ENCODE measurements at regions of chr5 and their contacts with region 1.

Region 1: DNA sequence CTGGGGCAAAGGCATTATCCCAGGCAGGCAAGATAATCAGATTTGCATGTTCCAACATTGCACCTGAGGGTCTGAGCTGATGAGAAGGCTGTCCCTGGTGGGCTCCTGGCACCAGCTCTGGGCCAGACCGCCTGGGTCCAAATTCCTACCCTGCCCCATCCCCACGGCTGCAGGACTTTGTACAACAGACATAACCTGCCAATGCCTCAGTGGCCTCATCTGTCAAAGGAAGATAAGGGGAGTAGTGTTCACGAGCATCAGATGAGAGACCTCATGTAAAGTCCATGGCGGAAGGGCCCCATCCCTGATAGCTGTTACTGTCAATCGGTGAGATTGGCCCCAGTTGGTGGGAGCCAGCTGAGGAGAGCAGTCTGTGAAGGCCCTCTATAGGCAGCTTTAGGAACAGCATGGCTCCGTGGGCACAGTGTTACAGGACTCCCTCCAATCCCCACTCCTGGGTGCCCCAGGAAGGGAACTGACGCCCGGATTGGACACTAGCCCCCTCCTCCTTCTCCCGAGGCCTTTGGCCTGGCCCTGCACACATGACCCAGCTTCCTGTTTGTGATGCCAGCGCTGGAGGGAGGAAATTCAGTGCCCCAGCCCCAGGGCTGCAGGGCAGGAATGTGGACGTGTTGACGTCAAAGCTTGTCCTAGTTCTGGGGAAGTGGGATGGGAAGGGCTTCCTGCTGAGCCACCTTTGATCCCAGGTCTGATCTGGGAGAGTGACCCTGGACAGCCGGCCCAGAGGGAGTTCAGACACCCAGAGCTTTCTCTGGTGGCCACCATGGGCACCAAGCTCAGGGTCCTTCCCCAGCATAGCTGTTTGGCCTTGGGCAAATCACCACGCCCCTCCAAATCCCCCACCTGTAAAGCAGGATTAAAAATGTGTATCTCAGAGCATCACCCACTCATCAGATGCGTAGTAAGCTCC is 56.2 kb downstream of the DUSP1 start:
- DNase-seq: peak; percentile 59 to 72
- ATAC-seq: peak; percentile 52 to 73
- H3K4me3 ChIP-seq: no peak overlapping the region
- H3K27ac ChIP-seq: peak overlapping the region; percentile 64 to 80 (median 76)
- H3K4me1 ChIP-seq: peaks cover 16 to 32% of the 10 kb centered on the region in 2 donors
- H3K27me3 ChIP-seq: no peaks in the 10 kb centered on the region
- CTCF ChIP-seq: peak; percentile 83 to 89 (median 87)
- POLR2A ChIP-seq: no peak

Region 2: GRCh38 chr5:172764849-172765765 is 50.4 kb after region 1 on chr5:
- in situ Hi-C with region 1: loop called in 1 of 4 experiments (anchors 10 kb)
- intact Hi-C with region 1: loop called (anchors 2 kb)
- DNase-seq: peak; percentile 91 to 95
- ATAC-seq: peak; percentile 53 to 60
- H3K4me3 ChIP-seq: peak overlapping the region; percentile 66 to 98 (median 83)
- H3K27ac ChIP-seq: peak overlapping the region; percentile 96 to 99 (median 96)
- H3K4me1 ChIP-seq: peaks cover 19 to 22% of the 10 kb centered on the region in 2 donors
- H3K27me3 ChIP-seq: no peaks in the 10 kb centered on the region
- CTCF ChIP-seq: peak in 2 of 5 experiments; percentile 14 to 28
- POLR2A ChIP-seq: no peak

Region 3: DNA sequence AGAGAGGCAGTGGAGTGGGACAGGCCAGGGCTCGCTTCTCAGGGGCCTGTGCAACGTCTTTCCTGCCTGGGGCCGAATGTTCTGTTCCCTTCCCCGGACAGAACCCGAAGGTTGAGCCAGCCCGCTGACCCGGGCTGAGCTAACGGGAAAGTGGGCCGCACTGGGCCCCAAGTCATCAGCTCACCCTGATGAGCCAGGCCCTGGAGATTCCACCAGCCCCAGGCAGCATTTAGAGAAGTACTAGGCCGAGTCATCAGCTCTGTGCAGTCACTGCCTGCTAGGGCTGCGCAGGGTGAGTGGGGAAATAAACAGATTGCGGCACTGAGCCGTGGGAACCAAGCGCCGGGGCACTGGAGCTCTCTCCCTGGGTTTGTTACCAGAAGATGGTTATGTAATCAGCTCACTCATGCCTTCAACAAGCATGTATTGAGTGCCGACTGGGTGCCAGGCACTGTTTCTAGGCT is 85.4 kb after region 1 on chr5:
- in situ Hi-C with region 1: no loop called
- intact Hi-C with region 1: no loop called
- DNase-seq: no peak
- ATAC-seq: no peak
- H3K4me3 ChIP-seq: no peak overlapping the region
- H3K27ac ChIP-seq: peak overlapping the region in 2 of 4 donors; percentile 3 to 31
- H3K4me1 ChIP-seq: peaks cover 10 to 15% of the 10 kb centered on the region in 2 donors
- H3K27me3 ChIP-seq: no peaks in the 10 kb centered on the region
- CTCF ChIP-seq: no peak
- POLR2A ChIP-seq: no peak

Region 4: GRCh38 chr5:172833686-172834414 is 119.1 kb after region 1 on chr5 and contains the start of gene ERGIC1:
- in situ Hi-C with region 1: no loop called
- intact Hi-C with region 1: loop called (anchors 10 kb)
- DNase-seq: peak; percentile 81 to 86
- ATAC-seq: peak; percentile 83 to 85
- H3K4me3 ChIP-seq: peak within 1 kb of the TSS; percentile 71 to 97 (median 86)
- H3K27ac ChIP-seq: peak within 1 kb of the TSS; percentile 83 to 93 (median 87)
- H3K4me1 ChIP-seq: peaks cover 30 to 34% of the 10 kb centered on the region in 2 donors
- H3K27me3 ChIP-seq: no peaks in the 10 kb centered on the region
- CTCF ChIP-seq: peak in 1 of 5 experiments; percentile 20
- POLR2A ChIP-seq: peak; percentile 83 to 93
- total RNA-seq, gene ERGIC1: 54.4 to 108 (median 88.0) TPM

Region 5: GRCh38 chr5:172902497-172903200 is 187.9 kb after region 1 on chr5:
- in situ Hi-C with region 1: no loop called
- intact Hi-C with region 1: loop called (anchors 2 kb)
- DNase-seq: peak; percentile 69 to 83
- ATAC-seq: peak; percentile 37 to 51
- H3K4me3 ChIP-seq: no peak overlapping the region
- H3K27ac ChIP-seq: peak overlapping the region; percentile 85 to 94 (median 92)
- H3K4me1 ChIP-seq: peaks cover 63 to 84% of the 10 kb centered on the region in 2 donors
- H3K27me3 ChIP-seq: no peaks in the 10 kb centered on the region
- CTCF ChIP-seq: peak; percentile 50 to 77 (median 63)
- POLR2A ChIP-seq: no peak

Region 6: DNA sequence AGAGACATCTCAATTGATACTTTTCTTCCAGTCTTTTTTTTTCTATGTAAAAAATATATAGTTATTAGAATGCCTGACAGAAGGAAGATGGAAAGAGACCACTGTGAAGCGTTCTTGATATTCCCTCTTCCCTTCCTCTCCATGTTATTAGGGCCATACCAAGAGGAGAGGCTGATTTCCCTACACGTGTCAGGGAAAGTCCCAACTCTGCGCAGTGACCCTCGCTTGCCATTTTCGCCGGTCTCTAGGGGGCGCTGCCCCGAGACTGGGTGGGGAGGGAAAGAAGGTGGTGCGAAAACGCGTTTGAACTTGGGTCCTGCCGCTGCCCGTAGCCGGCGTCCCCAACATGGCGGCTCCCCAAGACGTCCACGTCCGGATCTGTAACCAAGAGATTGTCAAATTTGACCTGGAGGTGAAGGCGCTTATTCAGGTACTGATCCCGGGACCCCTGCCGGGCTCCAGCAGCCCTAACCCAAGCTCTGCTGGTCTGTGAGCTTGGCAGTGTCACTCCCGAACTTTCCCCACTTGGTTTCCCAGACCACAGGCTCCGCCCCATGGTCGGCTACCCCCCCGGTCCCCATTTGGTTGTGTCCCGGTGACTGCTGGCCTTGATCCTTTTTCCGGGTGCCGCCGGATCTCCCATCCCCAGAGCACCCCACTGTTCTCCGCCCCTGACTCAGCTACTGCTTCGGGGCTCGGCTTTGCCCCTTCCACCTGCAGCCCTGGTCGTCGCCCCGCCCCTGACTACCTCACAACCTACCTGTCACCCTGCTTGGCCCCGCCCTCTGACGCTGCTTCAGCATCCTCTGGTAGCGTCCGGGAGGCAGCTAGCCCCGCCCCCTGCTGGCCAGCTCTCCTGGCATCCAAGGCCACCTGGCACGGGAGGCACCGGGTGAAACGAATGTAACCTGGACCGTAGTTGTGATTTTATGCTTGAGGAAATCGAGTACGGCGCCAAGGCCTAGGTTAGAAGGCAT is 429.7 kb after region 1 on chr5 and contains the start of gene BNIP1:
- in situ Hi-C with region 1: loop called in 1 of 4 experiments (anchors 25 kb)
- intact Hi-C with region 1: loop called (anchors 10 kb)
- DNase-seq: peak; percentile 77 to 91
- ATAC-seq: peak; percentile 89 to 93
- H3K4me3 ChIP-seq: peak within 1 kb of the TSS; percentile 73 to 98 (median 84)
- H3K27ac ChIP-seq: peak within 1 kb of the TSS; percentile 83 to 91 (median 86)
- H3K4me1 ChIP-seq: peaks cover 3 to 11% of the 10 kb centered on the region in 2 donors
- H3K27me3 ChIP-seq: no peaks in the 10 kb centered on the region
- CTCF ChIP-seq: peak; percentile 86 to 92 (median 87)
- POLR2A ChIP-seq: peak; percentile 33 to 51
- total RNA-seq, gene BNIP1: 9.2 to 21.6 (median 17.1) TPM

Region 7: DNA sequence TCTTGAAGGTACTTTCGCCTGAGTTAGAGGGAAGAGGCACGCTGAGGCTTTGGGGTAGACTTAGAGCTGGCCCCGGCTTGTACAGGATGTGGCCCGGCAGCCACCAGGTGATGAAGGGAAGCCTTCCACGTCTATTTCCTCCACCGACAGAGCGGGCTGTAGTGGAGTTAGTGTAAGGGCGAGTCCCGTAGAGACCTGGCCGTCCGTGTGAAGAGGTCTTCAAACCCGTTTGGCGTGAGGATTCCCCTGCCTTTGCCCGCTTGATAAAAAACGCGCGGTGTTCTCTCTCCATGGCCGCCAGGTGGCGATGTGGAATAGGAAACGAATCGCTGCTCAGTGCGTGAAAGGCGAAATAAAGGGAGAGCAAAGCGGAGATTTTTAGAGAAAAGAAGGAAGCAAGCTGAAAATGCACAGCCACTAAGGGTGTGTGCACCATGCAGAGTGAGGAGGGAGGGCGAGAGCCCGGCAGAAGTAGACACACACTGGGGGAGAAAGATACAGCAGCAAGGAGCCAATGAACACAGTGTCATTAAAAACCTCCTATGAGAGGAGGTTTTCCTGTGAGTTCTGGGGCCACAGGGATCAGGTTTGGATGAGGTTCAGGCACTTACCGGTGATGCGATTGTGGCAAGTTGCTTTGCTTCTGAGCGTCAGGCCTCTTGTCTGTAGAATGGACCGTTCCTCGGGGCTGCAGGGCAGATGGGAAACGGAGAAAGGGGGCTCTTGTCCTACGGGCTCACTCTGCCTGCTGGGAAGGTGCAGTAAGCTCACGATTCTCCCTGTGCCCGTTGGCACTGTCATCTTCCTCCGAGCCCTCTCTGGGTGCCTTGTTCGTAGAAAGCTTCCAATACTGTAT is 579.3 kb after region 1 on chr5:
- in situ Hi-C with region 1: loop called in 1 of 4 experiments (anchors 25 kb)
- intact Hi-C with region 1: no loop called
- DNase-seq: peak; percentile 40 to 49
- ATAC-seq: peak; percentile 70 to 90
- H3K4me3 ChIP-seq: no peak overlapping the region
- H3K27ac ChIP-seq: no peak overlapping the region
- H3K4me1 ChIP-seq: peaks cover 3 to 6% of the 10 kb centered on the region in 2 donors
- H3K27me3 ChIP-seq: peaks cover 0 to 1% (median 0%) of the 10 kb centered on the region in 3 donors
- CTCF ChIP-seq: peak; percentile 82 to 92 (median 87)
- POLR2A ChIP-seq: no peak